Activated naive CD4-positive, alpha-beta T cell treated with anti-CD3 and anti-CD28 coated beads, Interleukin-2, amount 10 ng/mL, durations not matched to agents 7 days and 5 days (primary cell): ENCODE measurements at regions of chr22 and their contacts with region 1.

Region 1: DNA sequence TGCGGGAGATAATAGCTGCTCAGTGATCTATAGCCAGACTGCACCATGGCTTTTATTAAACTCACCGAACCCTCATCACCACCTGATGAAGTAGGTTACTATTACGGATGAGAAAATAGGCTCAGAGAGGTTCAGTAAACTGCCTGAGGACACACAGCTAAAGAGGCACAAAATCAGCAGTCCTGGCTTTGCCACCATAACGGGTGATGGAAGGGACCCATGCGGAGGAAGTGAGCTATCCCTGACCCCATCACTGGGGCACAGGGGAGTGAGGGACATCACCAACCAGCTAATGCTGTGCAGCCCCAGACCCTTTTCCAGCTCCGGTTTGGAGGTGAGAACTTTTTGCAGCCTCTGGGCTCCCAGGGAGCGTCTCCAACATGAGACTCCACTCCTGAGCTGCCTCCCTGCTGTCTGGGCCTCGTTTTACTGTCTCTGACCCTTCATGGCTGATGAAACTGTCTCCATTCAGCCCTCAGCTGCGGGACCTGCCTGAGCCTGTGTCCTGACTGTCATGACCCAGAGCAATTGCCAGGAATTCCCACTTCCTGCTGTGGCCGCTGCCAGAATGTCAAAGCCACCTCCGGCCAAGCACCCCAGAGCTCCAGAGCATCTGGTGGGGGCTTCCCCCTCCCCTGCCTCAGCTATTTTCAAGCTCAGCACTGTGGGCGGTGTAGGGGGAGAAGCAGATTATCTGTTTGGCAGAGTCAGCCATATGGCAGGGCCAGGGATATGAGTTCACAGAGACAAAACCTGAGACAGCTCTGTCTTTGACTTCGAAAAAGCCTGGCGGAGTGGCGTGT is 7.5 kb upstream of the DERL3 start:
- DNase-seq: no peak
- H3K4me3 Mint-ChIP-seq: no peak overlapping the region
- H3K27ac Mint-ChIP-seq: no peak overlapping the region
- H3K4me1 Mint-ChIP-seq: peaks cover 5% of the 10 kb centered on the region
- H3K27me3 Mint-ChIP-seq: peaks cover 39% of the 10 kb centered on the region

Region 2: GRCh38 chr22:23767673-23768548 is 78.4 kb before region 1 on chr22 and contains the start of gene CHCHD10:
- CTCF ChIA-PET with region 1: interaction called, 12 read pairs
- DNase-seq: peak; percentile 85
- H3K4me3 Mint-ChIP-seq: peak within 1 kb of the TSS; percentile 80
- H3K27ac Mint-ChIP-seq: peak within 1 kb of the TSS; percentile 81
- H3K4me1 Mint-ChIP-seq: peaks cover 64% of the 10 kb centered on the region
- H3K27me3 Mint-ChIP-seq: peaks cover 11% of the 10 kb centered on the region

Region 3: DNA sequence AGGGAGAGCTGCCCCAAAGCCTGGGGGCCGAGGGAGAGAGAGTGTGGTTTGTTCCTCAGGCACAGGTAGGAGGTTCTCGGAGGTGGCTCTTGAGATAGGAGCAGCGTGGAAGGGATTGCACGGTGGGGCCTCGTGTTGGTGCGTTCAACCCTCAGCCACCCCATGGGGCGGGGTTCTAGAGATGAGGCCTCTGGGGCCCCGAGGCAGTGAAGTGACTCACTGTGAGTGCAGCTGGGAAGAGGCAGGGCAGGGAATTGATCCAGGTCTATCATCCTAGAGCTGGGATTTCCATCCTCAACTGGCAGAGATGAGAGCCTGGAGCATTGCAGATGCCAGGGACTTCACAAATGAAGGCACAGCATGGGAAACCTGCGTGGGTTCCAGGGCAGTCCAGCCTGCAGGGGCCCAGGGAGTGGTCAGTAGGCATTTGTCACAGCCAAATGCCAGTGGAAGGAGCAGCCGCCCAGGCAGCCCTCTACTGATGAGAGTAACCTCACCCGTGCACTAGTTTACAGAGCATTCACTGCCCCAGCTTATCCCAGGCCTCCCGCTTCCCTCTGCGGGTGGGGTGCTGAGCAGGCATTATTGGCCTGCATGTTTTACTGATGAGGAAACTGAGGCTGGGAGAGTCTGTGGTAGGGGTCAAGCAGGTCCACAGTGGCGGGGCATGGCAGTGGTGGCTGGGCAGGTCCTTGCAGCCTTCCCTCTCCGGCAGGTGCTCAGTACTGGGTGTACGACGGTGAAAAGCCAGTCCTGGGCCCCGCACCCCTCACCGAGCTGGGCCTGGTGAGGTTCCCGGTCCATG is 64.6 kb before region 1 on chr22:
- CTCF ChIA-PET with region 1: no interaction called
- DNase-seq: no peak
- H3K4me3 Mint-ChIP-seq: no peak overlapping the region
- H3K27ac Mint-ChIP-seq: no peak overlapping the region
- H3K4me1 Mint-ChIP-seq: peaks cover 21% of the 10 kb centered on the region
- H3K27me3 Mint-ChIP-seq: peaks cover 6% of the 10 kb centered on the region

Region 4: GRCh38 chr22:23938328-23939016 is 92.2 kb after region 1 on chr22:
- CTCF ChIA-PET with region 1: no interaction called
- DNase-seq: no peak
- H3K4me3 Mint-ChIP-seq: no peak overlapping the region
- H3K27ac Mint-ChIP-seq: no peak overlapping the region
- H3K4me1 Mint-ChIP-seq: no peaks in the 10 kb centered on the region
- H3K27me3 Mint-ChIP-seq: peaks cover 9% of the 10 kb centered on the region

Region 5: DNA sequence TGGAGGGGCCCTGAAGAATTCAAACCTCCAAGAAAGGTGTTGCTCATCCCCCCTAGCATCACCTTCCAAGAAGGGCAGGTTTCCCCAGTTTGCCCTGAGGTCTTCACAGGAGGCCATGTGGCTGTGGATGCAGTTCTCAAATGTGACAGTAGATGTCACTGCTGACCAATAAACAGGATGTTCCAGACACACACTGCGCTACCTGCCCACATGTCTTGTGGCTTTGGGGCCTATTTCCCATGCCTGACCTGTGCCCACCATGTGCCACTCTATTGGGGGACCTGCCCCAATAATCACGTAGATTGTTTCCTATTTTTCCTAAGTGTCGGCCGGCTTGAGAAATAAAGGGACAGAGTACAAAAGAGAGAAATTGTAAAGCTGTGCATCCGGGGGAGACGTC is 138.1 kb after region 1 on chr22:
- CTCF ChIA-PET with region 1: no interaction called
- DNase-seq: peak; percentile 70
- H3K4me3 Mint-ChIP-seq: no peak overlapping the region
- H3K27ac Mint-ChIP-seq: no peak overlapping the region
- H3K4me1 Mint-ChIP-seq: no peaks in the 10 kb centered on the region
- H3K27me3 Mint-ChIP-seq: peaks cover 16% of the 10 kb centered on the region